Activated CD4-positive, alpha-beta memory T cell treated with anti-CD3 and anti-CD28 coated beads for 36 hours (primary cell): ENCODE measurements at regions of chr5 and their contacts with region 1.

Region 1: GRCh38 chr5:80255732-80256479 is at the start of gene SERINC5:
- DNase-seq: peak; percentile 90
- H3K4me3 Mint-ChIP-seq: peak within 1 kb of the TSS; percentile 96
- H3K27ac Mint-ChIP-seq: peak within 1 kb of the TSS; percentile 98
- H3K4me1 Mint-ChIP-seq: peaks cover 46% of the 10 kb centered on the region
- H3K27me3 Mint-ChIP-seq: no peaks in the 10 kb centered on the region
- total RNA-seq, gene SERINC5: 42.8 to 48.0 TPM

Region 2: GRCh38 chr5:80125962-80126480 is 129.9 kb before region 1 on chr5:
- CTCF ChIA-PET with region 1: interaction called, 6 read pairs
- POLR2A ChIA-PET with region 1: interaction called, 10 read pairs
- intact Hi-C with region 1: loop called (anchors 1 kb)
- DNase-seq: peak; percentile 28
- H3K4me3 Mint-ChIP-seq: peak overlapping the region; percentile 51
- H3K27ac Mint-ChIP-seq: peak overlapping the region; percentile 70
- H3K4me1 Mint-ChIP-seq: peaks cover 52% of the 10 kb centered on the region
- H3K27me3 Mint-ChIP-seq: no peaks in the 10 kb centered on the region

Region 3: GRCh38 chr5:80181618-80182211 is 74.2 kb before region 1 on chr5:
- CTCF ChIA-PET with region 1: interaction called, 3 read pairs
- POLR2A ChIA-PET with region 1: interaction called, 22 read pairs
- intact Hi-C with region 1: no loop called
- DNase-seq: peak; percentile 68
- H3K4me3 Mint-ChIP-seq: peak overlapping the region; percentile 59
- H3K27ac Mint-ChIP-seq: peak overlapping the region; percentile 81
- H3K4me1 Mint-ChIP-seq: peaks cover 84% of the 10 kb centered on the region
- H3K27me3 Mint-ChIP-seq: no peaks in the 10 kb centered on the region

Region 4: DNA sequence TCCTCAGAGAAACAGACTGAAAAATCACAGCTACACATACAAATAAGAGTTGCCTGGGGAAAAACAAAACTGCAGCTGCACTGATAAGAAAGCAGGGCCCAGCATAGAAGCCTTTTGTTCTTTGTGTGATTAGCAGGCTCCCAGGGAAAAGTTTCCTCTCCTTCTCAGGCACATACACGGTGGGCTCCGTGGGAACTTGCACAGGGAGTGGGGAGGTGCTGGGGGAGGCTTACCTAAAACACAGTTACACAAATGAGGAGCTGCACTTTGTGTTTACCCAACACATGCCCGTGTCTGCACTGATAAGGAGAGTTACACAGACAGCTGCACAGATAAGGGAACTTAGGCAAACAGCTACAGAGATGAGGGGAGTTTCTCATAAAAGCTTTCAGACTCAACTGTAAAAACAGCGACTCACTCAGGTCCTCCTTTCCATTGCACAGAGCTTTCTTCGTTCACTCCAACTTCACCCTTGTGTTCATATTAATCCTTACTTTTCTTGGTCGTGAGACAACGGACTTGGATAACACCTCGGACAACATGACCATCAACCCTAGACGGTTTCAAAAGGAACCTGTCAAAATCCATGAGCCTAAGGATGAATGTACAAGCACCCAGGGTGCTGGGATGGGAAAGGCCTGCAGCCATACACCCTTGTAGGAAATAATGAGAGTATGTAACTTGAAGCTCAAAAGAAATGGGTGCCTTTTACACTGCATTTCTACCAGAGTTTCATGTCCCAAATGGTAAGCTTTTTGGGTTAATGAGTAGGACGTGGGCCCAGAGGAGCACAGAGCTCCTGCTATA is 50.9 kb before region 1 on chr5:
- CTCF ChIA-PET with region 1: interaction called, 22 read pairs
- POLR2A ChIA-PET with region 1: interaction called, 22 read pairs
- intact Hi-C with region 1: loop called (anchors 1 kb)
- DNase-seq: peak; percentile 33
- H3K4me3 Mint-ChIP-seq: peak overlapping the region; percentile 24
- H3K27ac Mint-ChIP-seq: peak overlapping the region; percentile 88
- H3K4me1 Mint-ChIP-seq: peaks cover 83% of the 10 kb centered on the region
- H3K27me3 Mint-ChIP-seq: no peaks in the 10 kb centered on the region

Region 5: DNA sequence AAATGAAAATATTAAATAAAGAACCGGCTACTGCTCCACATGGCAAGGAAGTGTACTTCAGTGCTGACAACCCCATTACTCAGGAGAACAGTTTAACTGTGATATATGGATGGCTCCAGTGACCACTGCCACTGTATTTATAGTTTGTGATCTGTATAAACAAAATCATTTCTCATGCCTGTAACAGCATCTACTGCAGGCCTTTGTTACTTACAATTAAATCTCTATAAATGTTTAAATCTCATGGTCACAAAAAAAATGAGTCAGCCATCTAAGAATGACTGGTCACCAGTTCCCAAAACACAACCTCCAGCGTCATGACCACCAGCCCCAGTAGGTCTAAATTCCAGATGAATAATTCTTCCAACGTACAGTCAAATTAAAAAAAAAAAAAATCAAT is 24.7 kb before region 1 on chr5:
- CTCF ChIA-PET with region 1: no interaction called
- POLR2A ChIA-PET with region 1: interaction called, 7 read pairs
- intact Hi-C with region 1: loop called (anchors 2 kb)
- DNase-seq: peak; percentile 55
- H3K4me3 Mint-ChIP-seq: no peak overlapping the region
- H3K27ac Mint-ChIP-seq: peak overlapping the region; percentile 67
- H3K4me1 Mint-ChIP-seq: peaks cover 73% of the 10 kb centered on the region
- H3K27me3 Mint-ChIP-seq: no peaks in the 10 kb centered on the region

Region 6: DNA sequence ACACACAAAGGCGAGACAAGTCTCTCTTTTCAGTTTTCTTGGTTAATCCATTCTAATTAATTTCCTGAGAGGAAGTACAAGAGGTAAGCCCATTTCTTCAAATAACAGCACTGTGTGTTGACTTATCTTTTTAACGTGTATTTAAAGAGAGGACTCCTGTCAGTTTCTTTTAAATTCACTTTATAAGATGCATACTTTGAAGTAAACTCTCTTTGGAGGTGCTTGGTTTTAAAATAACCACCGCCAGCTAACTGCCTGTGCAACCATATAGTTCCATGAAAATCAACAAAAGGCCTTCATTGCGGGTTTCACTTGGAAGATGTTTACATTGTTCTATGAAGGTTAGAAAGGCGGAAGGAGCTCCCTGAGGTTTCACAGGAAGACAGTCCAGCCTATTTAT is 13.0 kb after region 1 on chr5:
- CTCF ChIA-PET with region 1: interaction called, 4 read pairs
- POLR2A ChIA-PET with region 1: interaction called, 32 read pairs
- intact Hi-C with region 1: loop called (anchors 1 kb)
- DNase-seq: no peak
- H3K4me3 Mint-ChIP-seq: peak overlapping the region; percentile 20
- H3K27ac Mint-ChIP-seq: peak overlapping the region; percentile 82
- H3K4me1 Mint-ChIP-seq: peaks cover 29% of the 10 kb centered on the region
- H3K27me3 Mint-ChIP-seq: no peaks in the 10 kb centered on the region

Region 7: GRCh38 chr5:80654391-80655230 is 398.7 kb after region 1 on chr5 and contains the starts of genes DHFR and MSH3:
- CTCF ChIA-PET with region 1: no interaction called
- POLR2A ChIA-PET with region 1: no interaction called
- intact Hi-C with region 1: loop called (anchors 10 kb)
- DNase-seq: peak; percentile 95
- H3K4me3 Mint-ChIP-seq: peak within 1 kb of the TSS; percentile 82
- H3K27ac Mint-ChIP-seq: peak within 1 kb of the TSS; percentile 93
- H3K4me1 Mint-ChIP-seq: peaks cover 20% of the 10 kb centered on the region
- H3K27me3 Mint-ChIP-seq: no peaks in the 10 kb centered on the region
- total RNA-seq, gene DHFR: 108 to 110 TPM
- total RNA-seq, gene MSH3: 23.2 to 23.6 TPM